WTC11 (cell line): ENCODE measurements at regions of chr15 and their contacts with region 1.

Region 1: DNA sequence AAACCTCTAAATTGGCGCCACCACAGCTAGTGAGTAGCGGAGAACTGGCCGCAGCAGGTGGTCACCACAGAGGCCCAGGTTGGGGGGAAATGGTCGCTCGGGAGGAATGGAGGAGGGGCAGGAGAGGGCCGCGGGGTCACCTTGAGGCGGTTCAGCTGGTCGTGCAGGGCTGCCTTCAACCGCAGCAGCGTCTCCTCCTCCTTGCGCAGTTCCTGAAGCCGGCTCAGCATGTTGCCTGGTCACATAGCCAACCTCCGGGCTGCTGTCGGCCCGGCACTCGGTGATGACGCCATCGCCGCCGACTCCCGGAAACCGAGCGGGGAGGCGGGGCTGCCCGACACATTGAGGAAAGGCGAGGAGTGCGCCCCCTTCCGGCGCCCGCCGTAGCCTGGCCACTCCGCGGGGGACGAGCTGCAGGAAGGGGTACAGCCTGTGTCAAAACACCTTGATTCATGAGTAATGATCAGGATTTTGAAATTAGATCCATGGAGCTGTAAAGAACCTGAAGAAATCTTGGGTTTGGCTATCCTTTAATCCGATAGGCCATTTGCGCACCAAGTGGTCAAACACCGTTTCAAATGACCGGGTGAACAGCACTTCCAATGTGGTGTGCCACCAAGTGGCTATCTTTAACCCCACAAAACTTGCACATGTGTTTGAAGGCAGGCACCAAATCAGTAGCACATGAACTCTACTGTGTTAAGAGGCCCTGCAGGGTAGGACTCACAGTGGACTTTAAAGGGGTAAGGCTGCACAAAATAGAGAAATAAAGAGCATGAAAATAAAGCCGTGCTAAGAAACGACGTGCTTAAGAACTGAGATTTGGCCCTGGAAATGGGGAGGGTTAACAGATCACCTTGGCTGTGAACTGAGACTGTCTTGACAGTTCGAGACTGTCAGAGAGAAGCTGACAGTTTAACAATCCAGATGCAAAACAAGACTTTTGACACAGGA is at the start of gene SNAPC5:
- DNase-seq: peak; percentile 99
- ATAC-seq: peak; percentile 83
- H3K4me3 Mint-ChIP-seq: peak within 1 kb of the TSS; percentile 90
- H3K27ac Mint-ChIP-seq: peak within 1 kb of the TSS; percentile 99
- H3K4me1 Mint-ChIP-seq: peaks cover 21% of the 10 kb centered on the region
- H3K27me3 Mint-ChIP-seq: no peaks in the 10 kb centered on the region
- CTCF ChIP-seq: peak; percentile 91
- total RNA-seq, gene SNAPC5: 21.1 to 28.7 TPM (median 24.0 TPM) in 3 replicates

Region 2: GRCh38 chr15:66356345-66357236 is 141.2 kb before region 1 on chr15 and contains the start of gene TIPIN:
- CTCF ChIA-PET with region 1: interaction called, 10 read pairs
- POLR2A ChIA-PET with region 1: interaction called, 4 read pairs
- DNase-seq: peak; percentile 94
- ATAC-seq: peak; percentile 96
- H3K4me3 Mint-ChIP-seq: peak within 1 kb of the TSS; percentile 89
- H3K27ac Mint-ChIP-seq: peak within 1 kb of the TSS; percentile 86
- H3K4me1 Mint-ChIP-seq: peaks cover 13% of the 10 kb centered on the region
- H3K27me3 Mint-ChIP-seq: no peaks in the 10 kb centered on the region
- CTCF ChIP-seq: no peak
- total RNA-seq, gene TIPIN: 17.6 to 22.2 TPM (median 19.2 TPM) in 3 replicates

Region 3: GRCh38 chr15:66386204-66387123 is 111.3 kb before region 1 on chr15 and contains the start of gene MAP2K1:
- CTCF ChIA-PET with region 1: interaction called, 41 read pairs
- POLR2A ChIA-PET with region 1: interaction called, 7 read pairs
- DNase-seq: peak; percentile 96
- ATAC-seq: peak; percentile 91
- H3K4me3 Mint-ChIP-seq: peak within 1 kb of the TSS; percentile 96
- H3K27ac Mint-ChIP-seq: peak within 1 kb of the TSS; percentile 100
- H3K4me1 Mint-ChIP-seq: peaks cover 40% of the 10 kb centered on the region
- H3K27me3 Mint-ChIP-seq: peaks cover 3% of the 10 kb centered on the region; the same call in 1 of the 2 replicates
- CTCF ChIP-seq: no peak
- total RNA-seq, gene MAP2K1: 89.5 to 93.0 TPM (median 90.4 TPM) in 3 replicates

Region 4: GRCh38 chr15:66401130-66402021 is 96.4 kb before region 1 on chr15:
- CTCF ChIA-PET with region 1: interaction called, 50 read pairs
- POLR2A ChIA-PET with region 1: interaction called, 6 read pairs
- DNase-seq: peak; percentile 28
- ATAC-seq: peak; percentile 31; the same call in 1 of the 2 replicates
- H3K4me3 Mint-ChIP-seq: no peak overlapping the region; the same call in 1 of the 2 replicates
- H3K27ac Mint-ChIP-seq: peak overlapping the region; percentile 91
- H3K4me1 Mint-ChIP-seq: peaks cover 70% of the 10 kb centered on the region
- H3K27me3 Mint-ChIP-seq: no peaks in the 10 kb centered on the region
- CTCF ChIP-seq: no peak

Region 5: GRCh38 chr15:66472176-66472999 is 25.4 kb before region 1 on chr15:
- CTCF ChIA-PET with region 1: interaction called, 29 read pairs
- POLR2A ChIA-PET with region 1: interaction called, 3 read pairs
- DNase-seq: no peak
- ATAC-seq: 0 out of 2 replicates have a peak, but pooled peaks have one; percentile 4
- H3K4me3 Mint-ChIP-seq: 0 out of 2 replicates have a peak overlapping the region, but pooled peaks have one; percentile 12
- H3K27ac Mint-ChIP-seq: peak overlapping the region; percentile 96
- H3K4me1 Mint-ChIP-seq: peaks cover 80% of the 10 kb centered on the region
- H3K27me3 Mint-ChIP-seq: no peaks in the 10 kb centered on the region
- CTCF ChIP-seq: no peak